Sigmoid colon (tissue), 7 donors: ENCODE measurements at regions of chr16 and their contacts with region 1.

Region 1: GRCh38 chr16:49855280-49855821 is 561 bp downstream of the ZNF423 start:
- DNase-seq: peak; percentile 94
- H3K4me3 ChIP-seq: peak overlapping the region; percentile 65 to 84 (median 82)
- H3K27ac ChIP-seq: peak overlapping the region; percentile 89 to 96 (median 92)
- H3K4me1 ChIP-seq: peaks cover 0 to 45% (median 34%) of the 10 kb centered on the region in 4 donors
- H3K27me3 ChIP-seq: peaks cover 0 to 20% (median 8%) of the 10 kb centered on the region in 3 donors
- CTCF ChIP-seq: no peak
- EP300 ChIP-seq: no peak
- POLR2A ChIP-seq: peak in 1 of 2 donors; percentile 21

Region 2: DNA sequence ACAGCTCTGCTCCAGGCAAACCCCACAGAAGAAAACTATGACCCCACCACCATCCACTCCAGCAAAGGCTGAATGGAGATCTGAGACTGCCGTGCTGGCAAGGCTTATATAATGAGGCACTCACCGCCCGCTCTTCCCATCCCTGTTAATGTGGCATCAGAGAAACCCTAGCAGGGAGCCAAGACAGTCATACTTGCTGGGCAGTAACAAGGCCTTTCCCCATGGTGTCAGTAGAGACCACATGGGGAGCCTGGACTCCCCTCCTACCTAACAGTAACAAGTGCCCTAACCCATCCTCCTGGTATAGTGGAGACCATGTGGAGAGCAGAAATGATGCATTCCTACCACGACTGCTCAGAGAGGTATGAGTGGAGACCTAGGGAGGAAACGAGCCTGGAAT is 246.6 kb before region 1 on chr16:
- intact Hi-C with region 1: loop called (anchors 5 kb)
- DNase-seq: peak; percentile 68
- H3K4me3 ChIP-seq: no peak overlapping the region
- H3K27ac ChIP-seq: peak overlapping the region in 2 of 4 donors; percentile 25 to 51
- H3K4me1 ChIP-seq: peaks cover 0 to 16% (median 13%) of the 10 kb centered on the region in 4 donors
- H3K27me3 ChIP-seq: no peaks in the 10 kb centered on the region
- CTCF ChIP-seq: peak; percentile 10 to 61 (median 26)
- EP300 ChIP-seq: no peak
- POLR2A ChIP-seq: no peak

Region 3: GRCh38 chr16:49755313-49755620 is 100.1 kb before region 1 on chr16:
- intact Hi-C with region 1: loop called (anchors 5 kb)
- DNase-seq: no peak
- H3K4me3 ChIP-seq: peak overlapping the region in 3 of 4 donors; percentile 45 to 55 (median 47)
- H3K27ac ChIP-seq: peak overlapping the region; percentile 38 to 69 (median 58)
- H3K4me1 ChIP-seq: peaks cover 0 to 22% (median 21%) of the 10 kb centered on the region in 4 donors
- H3K27me3 ChIP-seq: no peaks in the 10 kb centered on the region
- CTCF ChIP-seq: peak in 1 of 4 experiments; percentile 34
- EP300 ChIP-seq: no peak
- POLR2A ChIP-seq: no peak

Region 4: DNA sequence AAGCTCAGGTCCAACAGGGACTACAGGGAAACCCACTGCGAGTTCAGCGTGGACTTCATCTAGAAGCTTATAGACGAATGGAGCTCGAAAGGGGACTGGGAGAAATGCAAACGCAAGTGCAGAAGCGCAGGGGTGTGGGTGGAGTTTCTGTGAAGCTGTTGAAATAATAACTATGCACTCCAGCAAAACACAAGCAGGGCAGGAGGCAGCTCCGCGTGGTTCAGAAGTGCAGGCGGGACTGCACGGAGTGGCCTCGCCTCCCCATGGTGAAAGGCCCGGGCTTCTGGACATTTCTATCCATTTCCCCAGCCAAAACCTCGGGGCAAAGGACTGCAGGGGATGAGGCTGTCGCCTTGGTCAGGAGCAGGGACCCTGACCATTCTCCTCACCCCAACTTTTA is 74.0 kb before region 1 on chr16:
- intact Hi-C with region 1: no loop called
- DNase-seq: no peak
- H3K4me3 ChIP-seq: no peak overlapping the region
- H3K27ac ChIP-seq: no peak overlapping the region
- H3K4me1 ChIP-seq: no peaks in the 10 kb centered on the region
- H3K27me3 ChIP-seq: no peaks in the 10 kb centered on the region
- CTCF ChIP-seq: no peak
- EP300 ChIP-seq: no peak
- POLR2A ChIP-seq: no peak